ENCODE measurements at regions of chr2 and their contacts with region 1.

Region 1: GRCh38 chr2:9142551-9143263 is 63.9 kb upstream of the ASAP2 start:
- H3K4me3 Mint-ChIP-seq: no peak overlapping the region
- H3K27ac Mint-ChIP-seq: peak overlapping the region; percentile 15
- H3K4me1 Mint-ChIP-seq: peaks cover 50% of the 10 kb centered on the region
- H3K27me3 Mint-ChIP-seq: peaks cover 32% of the 10 kb centered on the region

Region 2: DNA sequence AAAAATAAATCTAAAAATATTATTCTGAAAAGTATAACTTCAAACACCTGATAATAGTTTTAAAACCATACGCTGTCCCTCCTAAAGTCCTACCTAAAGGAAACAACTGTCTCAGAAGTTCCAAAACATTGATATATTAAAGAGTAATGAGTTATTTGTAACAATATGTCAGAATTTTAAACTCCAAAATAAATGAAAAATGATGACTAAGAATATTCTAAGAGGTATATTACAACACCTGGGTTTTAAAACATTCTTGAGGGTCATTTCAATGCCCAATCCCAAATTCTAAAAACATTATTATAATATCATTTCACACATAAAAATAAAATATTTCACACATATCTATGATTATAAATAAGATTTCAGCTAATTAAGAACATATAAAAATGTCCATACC is 325.5 kb before region 1 on chr2:
- intact Hi-C with region 1: no loop called
- H3K4me3 Mint-ChIP-seq: no peak overlapping the region
- H3K27ac Mint-ChIP-seq: no peak overlapping the region
- H3K4me1 Mint-ChIP-seq: peaks cover 7% of the 10 kb centered on the region
- H3K27me3 Mint-ChIP-seq: no peaks in the 10 kb centered on the region

Region 3: DNA sequence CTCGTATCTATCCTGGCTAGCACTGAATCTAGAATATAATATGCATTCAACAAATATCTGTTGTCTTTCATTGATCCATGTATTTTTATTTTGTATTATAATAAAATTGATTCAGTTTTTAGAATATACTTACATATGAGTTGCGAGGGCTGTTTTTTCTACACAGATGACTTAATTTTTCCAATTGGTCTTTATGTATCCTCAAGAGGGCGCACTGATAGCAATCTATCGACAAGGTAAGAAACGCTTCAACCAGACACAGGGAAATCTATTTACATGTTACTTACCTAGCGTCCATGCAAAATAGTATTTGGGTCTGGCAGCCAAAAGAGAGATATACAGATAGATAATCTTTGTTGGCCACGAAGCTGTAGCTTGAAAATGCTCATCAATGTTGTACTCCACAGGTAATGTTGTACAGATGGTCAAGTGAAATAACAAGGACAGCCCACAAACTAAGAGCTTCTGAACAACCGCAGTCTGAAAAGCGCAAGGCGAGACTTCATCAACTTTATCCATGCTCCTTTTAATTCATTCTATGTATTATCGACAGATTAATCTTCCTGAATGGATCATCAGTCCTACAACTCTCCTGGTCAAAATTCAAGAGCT is 269.8 kb before region 1 on chr2:
- intact Hi-C with region 1: loop called (anchors 2 kb)
- H3K4me3 Mint-ChIP-seq: no peak overlapping the region
- H3K27ac Mint-ChIP-seq: no peak overlapping the region
- H3K4me1 Mint-ChIP-seq: peaks cover 4% of the 10 kb centered on the region
- H3K27me3 Mint-ChIP-seq: no peaks in the 10 kb centered on the region

Region 4: DNA sequence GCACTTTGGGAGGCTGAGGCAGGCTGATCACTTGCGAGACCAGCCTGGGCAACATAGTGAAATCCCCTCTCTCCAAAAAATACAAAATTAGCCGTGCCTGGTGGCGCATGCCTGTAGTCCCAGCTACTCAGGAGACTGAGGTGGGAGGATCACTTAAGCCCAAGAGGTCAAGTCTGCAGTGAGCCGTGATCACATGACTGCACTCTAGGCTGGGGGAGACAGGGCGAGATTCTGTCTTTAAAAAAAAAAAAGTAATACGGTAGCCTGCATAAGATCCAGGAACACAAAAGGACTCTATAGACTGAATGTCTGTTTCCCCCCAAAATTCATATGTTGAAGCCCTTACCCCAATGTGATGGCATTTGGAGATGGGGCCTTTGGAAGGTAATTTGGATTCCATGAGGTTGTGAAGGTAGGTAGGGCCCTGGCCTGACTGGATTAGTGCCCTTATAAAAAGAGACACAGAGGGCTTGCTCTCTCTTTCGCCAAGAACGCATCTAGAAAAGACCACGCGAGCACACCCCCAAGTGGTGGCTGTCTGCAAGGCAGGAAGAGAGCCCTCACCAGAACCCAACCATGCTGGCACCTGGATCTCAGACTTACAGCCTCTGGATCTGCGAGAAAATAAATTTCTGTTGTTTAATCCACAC is 156.3 kb before region 1 on chr2:
- intact Hi-C with region 1: loop called (anchors 10 kb)
- H3K4me3 Mint-ChIP-seq: no peak overlapping the region
- H3K27ac Mint-ChIP-seq: peak overlapping the region; percentile 50
- H3K4me1 Mint-ChIP-seq: peaks cover 43% of the 10 kb centered on the region
- H3K27me3 Mint-ChIP-seq: no peaks in the 10 kb centered on the region

Region 5: GRCh38 chr2:9001229-9001628 is 141.5 kb before region 1 on chr2:
- intact Hi-C with region 1: no loop called
- H3K4me3 Mint-ChIP-seq: no peak overlapping the region
- H3K27ac Mint-ChIP-seq: no peak overlapping the region
- H3K4me1 Mint-ChIP-seq: peaks cover 48% of the 10 kb centered on the region
- H3K27me3 Mint-ChIP-seq: peaks cover 3% of the 10 kb centered on the region

Region 6: GRCh38 chr2:9205963-9206948 is 63.5 kb after region 1 on chr2 and contains the start of gene ASAP2:
- intact Hi-C with region 1: loop called (anchors 5 kb)
- H3K4me3 Mint-ChIP-seq: peak within 1 kb of the TSS; percentile 77
- H3K27ac Mint-ChIP-seq: peak within 1 kb of the TSS; percentile 82
- H3K4me1 Mint-ChIP-seq: peaks cover 8% of the 10 kb centered on the region
- H3K27me3 Mint-ChIP-seq: peaks cover 26% of the 10 kb centered on the region

Region 7: GRCh38 chr2:9333591-9334171 is 191.0 kb after region 1 on chr2:
- intact Hi-C with region 1: loop called (anchors 2 kb)
- H3K4me3 Mint-ChIP-seq: no peak overlapping the region
- H3K27ac Mint-ChIP-seq: peak overlapping the region; percentile 13
- H3K4me1 Mint-ChIP-seq: peaks cover 44% of the 10 kb centered on the region
- H3K27me3 Mint-ChIP-seq: no peaks in the 10 kb centered on the region

Region 8: DNA sequence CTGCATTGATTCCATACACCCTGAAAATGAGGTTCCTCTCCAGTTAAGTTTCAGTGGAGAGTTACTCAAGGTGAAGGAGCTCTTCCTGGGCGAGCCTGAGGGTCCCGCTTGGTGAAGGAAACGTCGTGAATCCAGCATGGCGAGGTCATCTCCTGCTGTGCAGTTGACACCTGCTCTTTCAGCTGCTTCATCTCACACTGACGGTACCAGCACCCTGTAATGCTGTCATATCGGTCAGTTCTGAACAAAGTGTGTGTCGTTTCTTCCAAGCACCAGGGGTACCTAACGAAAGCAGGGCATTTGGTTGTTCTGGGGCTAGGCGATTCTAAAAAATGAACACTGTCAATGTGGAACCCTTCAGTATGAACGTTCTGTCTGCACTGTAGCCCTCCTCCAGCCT is 228.0 kb after region 1 on chr2:
- intact Hi-C with region 1: loop called (anchors 2 kb)
- H3K4me3 Mint-ChIP-seq: no peak overlapping the region
- H3K27ac Mint-ChIP-seq: no peak overlapping the region
- H3K4me1 Mint-ChIP-seq: no peaks in the 10 kb centered on the region
- H3K27me3 Mint-ChIP-seq: no peaks in the 10 kb centered on the region

Region 9: GRCh38 chr2:9423100-9423921 is 280.6 kb after region 1 on chr2 and contains the starts of genes CPSF3 and ITGB1BP1:
- intact Hi-C with region 1: loop called (anchors 5 kb)
- H3K4me3 Mint-ChIP-seq: no peak within 1 kb of the TSS
- H3K27ac Mint-ChIP-seq: peak within 1 kb of the TSS; percentile 96
- H3K4me1 Mint-ChIP-seq: peaks cover 24% of the 10 kb centered on the region
- H3K27me3 Mint-ChIP-seq: no peaks in the 10 kb centered on the region